ENCODE measurements at regions of chr20 and their contacts with region 1.

Region 1: GRCh38 chr20:22601361-22602141 is 17.2 kb upstream of the FOXA2 start:
- DNase-seq: no peak
- ATAC-seq: no peak
- H3K4me3 ChIP-seq: no peak overlapping the region
- H3K27ac ChIP-seq: no peak overlapping the region
- H3K4me1 ChIP-seq: no peaks in the 10 kb centered on the region
- H3K27me3 ChIP-seq: no peaks in the 10 kb centered on the region
- CTCF ChIP-seq: no peak
- POLR2A ChIP-seq: no peak

Region 2: GRCh38 chr20:22333885-22334545 is 267.5 kb before region 1 on chr20:
- intact Hi-C with region 1: loop called (anchors 5 kb)
- DNase-seq: peak; percentile 61 to 74 (median 68)
- ATAC-seq: peak; percentile 86
- H3K4me3 ChIP-seq: no peak overlapping the region
- H3K27ac ChIP-seq: no peak overlapping the region
- H3K4me1 ChIP-seq: no peaks in the 10 kb centered on the region
- H3K27me3 ChIP-seq: no peaks in the 10 kb centered on the region
- CTCF ChIP-seq: peak; percentile 52 to 78 (median 71)
- POLR2A ChIP-seq: no peak

Region 3: DNA sequence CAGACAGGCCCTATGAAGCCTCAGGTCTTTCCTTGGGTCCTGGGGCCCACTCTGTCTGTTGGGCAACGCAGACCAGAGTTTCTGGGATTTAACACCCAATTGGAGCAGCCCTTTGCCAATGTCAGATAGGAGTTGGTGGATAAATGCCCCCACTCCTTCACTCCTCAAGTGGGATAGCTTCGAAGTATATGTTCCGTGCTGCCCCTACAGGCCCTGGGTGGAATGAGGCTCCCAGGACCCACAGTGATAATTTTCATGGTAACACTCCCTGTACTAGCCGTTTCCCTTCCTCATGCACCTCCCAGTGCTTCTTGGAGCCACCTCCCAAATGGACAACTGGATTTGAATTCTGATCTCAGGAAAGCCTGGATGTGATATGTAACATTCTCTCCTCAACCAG is 162.6 kb before region 1 on chr20:
- intact Hi-C with region 1: no loop called
- DNase-seq: no peak
- ATAC-seq: no peak
- H3K4me3 ChIP-seq: no peak overlapping the region
- H3K27ac ChIP-seq: no peak overlapping the region
- H3K4me1 ChIP-seq: no peaks in the 10 kb centered on the region
- H3K27me3 ChIP-seq: no peaks in the 10 kb centered on the region
- CTCF ChIP-seq: peak in 1 of 7 experiments; percentile 5
- POLR2A ChIP-seq: no peak

Region 4: GRCh38 chr20:22663528-22664025 is 62.0 kb after region 1 on chr20:
- intact Hi-C with region 1: loop called (anchors 10 kb)
- DNase-seq: no peak
- ATAC-seq: no peak
- H3K4me3 ChIP-seq: no peak overlapping the region
- H3K27ac ChIP-seq: no peak overlapping the region
- H3K4me1 ChIP-seq: no peaks in the 10 kb centered on the region
- H3K27me3 ChIP-seq: no peaks in the 10 kb centered on the region
- CTCF ChIP-seq: no peak
- POLR2A ChIP-seq: no peak